ENCODE measurements at regions of chr14 and their contacts with region 1.

Region 1: DNA sequence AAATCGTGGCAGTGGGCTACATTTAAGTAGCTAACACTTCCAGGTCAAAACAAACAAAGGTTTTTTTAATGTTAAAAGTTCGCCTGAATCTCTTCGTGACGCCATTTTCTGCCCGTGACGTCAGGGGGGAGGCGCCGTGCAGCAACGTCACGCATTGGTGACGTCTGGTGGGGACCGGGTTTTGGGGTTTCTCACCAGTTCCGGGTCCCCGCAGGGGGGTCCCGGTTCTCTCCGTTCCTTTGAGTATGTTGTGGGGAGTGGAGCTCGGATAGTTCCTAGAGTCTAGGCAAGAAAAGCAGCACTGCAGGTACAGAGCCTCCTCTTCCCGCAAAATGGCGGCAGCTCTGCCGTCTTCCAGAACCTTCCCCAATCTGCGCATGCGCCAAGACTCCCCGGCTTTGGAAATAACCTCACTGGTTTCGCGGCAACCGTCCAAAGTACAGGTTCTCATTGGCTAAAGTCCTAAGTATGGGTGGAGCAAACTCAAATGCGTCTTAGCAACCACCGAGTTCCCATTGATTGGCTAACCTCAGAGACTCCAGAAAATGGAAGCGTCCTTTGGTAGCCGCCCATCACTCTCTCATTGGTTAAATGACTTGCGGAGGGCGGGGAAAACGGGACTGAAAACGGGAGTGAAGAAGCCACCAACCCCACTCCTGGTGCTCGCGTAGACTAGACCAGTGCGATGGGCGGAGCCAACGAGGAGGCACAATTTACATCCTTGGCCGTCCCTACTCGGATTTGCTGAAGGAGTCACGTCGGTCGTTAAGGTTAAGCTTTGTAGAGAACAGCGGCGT is at the start of gene RBM23:
- DNase-seq: peak; percentile 99 to 100
- ATAC-seq: peak; percentile 86 to 97 (median 91)
- H3K4me3 ChIP-seq: peak within 1 kb of the TSS; percentile 64
- H3K4me3 Mint-ChIP-seq: peak within 1 kb of the TSS; percentile 99
- H3K27ac ChIP-seq: peak within 1 kb of the TSS; percentile 96
- H3K27ac Mint-ChIP-seq: peak within 1 kb of the TSS; percentile 100
- H3K4me1 ChIP-seq: peaks cover 21% of the 10 kb centered on the region
- H3K4me1 Mint-ChIP-seq: peaks cover 25 to 30% of the 10 kb centered on the region in 2 donors
- H3K27me3 ChIP-seq: no peaks in the 10 kb centered on the region
- H3K27me3 Mint-ChIP-seq: peaks cover 0 to 3% of the 10 kb centered on the region in 2 donors
- CTCF ChIP-seq: no peak
- total RNA-seq, gene RBM23: 86.4 to 120 (median 108) TPM

Region 2: GRCh38 chr14:21924479-21924878 is 994.5 kb before region 1 on chr14:
- intact Hi-C with region 1: loop called (anchors 10 kb)
- DNase-seq: peak; percentile 53 to 85
- ATAC-seq: peak; percentile 76 to 80 (median 76)
- H3K4me3 ChIP-seq: peak overlapping the region; percentile 10
- H3K4me3 Mint-ChIP-seq: peak overlapping the region; percentile 85
- H3K27ac ChIP-seq: peak overlapping the region; percentile 78
- H3K27ac Mint-ChIP-seq: peak overlapping the region; percentile 85 to 88
- H3K4me1 ChIP-seq: peaks cover 16% of the 10 kb centered on the region
- H3K4me1 Mint-ChIP-seq: peaks cover 61 to 64% of the 10 kb centered on the region in 2 donors
- H3K27me3 ChIP-seq: no peaks in the 10 kb centered on the region
- H3K27me3 Mint-ChIP-seq: no peaks in the 10 kb centered on the region
- CTCF ChIP-seq: peak; percentile 27

Region 3: DNA sequence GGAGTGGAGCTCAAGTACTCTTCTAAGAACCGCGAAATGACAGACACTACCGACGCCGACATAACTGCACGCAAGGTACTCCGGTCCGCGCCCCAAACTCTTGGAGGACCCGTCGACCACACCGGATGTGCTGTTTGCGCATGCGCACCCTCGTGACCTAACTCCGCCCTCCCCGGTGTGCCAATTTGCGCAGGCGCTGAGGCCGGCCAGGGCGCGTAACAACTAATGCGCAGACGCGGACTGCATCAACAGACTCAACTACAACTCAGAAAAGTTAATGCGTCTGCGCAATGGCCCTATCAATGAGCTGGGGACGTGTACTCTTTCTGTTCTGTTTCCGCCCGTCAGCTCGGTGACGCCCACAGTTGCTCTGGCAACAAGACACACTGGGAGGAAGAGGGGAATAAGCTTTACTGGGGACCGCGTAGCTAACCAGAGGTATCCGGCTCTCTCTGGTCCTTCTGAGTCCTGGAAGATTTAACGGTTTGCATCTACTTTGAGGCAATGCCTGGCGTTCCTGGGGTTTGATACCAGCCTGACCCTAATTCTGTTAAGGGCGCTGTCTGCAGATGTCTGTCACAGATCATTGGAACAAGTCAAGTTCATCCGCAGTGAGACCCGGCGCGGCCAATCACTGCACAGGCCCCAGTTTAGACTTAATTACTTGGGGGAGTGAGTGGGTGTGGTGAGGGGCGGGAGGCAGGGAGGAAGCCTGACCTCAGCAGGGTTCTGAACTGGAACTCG is 329.7 kb before region 1 on chr14 and contains the start of gene DAD1:
- intact Hi-C with region 1: loop called (anchors 1 kb)
- DNase-seq: peak; percentile 100
- ATAC-seq: peak; percentile 86 to 96 (median 90)
- H3K4me3 ChIP-seq: peak within 1 kb of the TSS; percentile 80
- H3K4me3 Mint-ChIP-seq: peak within 1 kb of the TSS; percentile 90
- H3K27ac ChIP-seq: peak within 1 kb of the TSS; percentile 97
- H3K27ac Mint-ChIP-seq: peak within 1 kb of the TSS; percentile 97 to 99
- H3K4me1 ChIP-seq: peaks cover 19% of the 10 kb centered on the region
- H3K4me1 Mint-ChIP-seq: peaks cover 45 to 47% of the 10 kb centered on the region in 2 donors
- H3K27me3 ChIP-seq: no peaks in the 10 kb centered on the region
- H3K27me3 Mint-ChIP-seq: peaks cover 13 to 17% of the 10 kb centered on the region in 2 donors
- CTCF ChIP-seq: no peak
- total RNA-seq, gene DAD1: 79.5 to 97.9 (median 92.8) TPM

Region 4: GRCh38 chr14:22766456-22767322 is 152.3 kb before region 1 on chr14 and contains the start of gene OXA1L:
- intact Hi-C with region 1: loop called (anchors 2 kb)
- DNase-seq: peak; percentile 90 to 99
- ATAC-seq: peak; percentile 92 to 95 (median 95)
- H3K4me3 ChIP-seq: peak within 1 kb of the TSS; percentile 86
- H3K4me3 Mint-ChIP-seq: peak within 1 kb of the TSS; percentile 92
- H3K27ac ChIP-seq: peak within 1 kb of the TSS; percentile 79
- H3K27ac Mint-ChIP-seq: peak within 1 kb of the TSS; percentile 93 to 94
- H3K4me1 ChIP-seq: peaks cover 14% of the 10 kb centered on the region
- H3K4me1 Mint-ChIP-seq: peaks cover 35 to 36% of the 10 kb centered on the region in 2 donors
- H3K27me3 ChIP-seq: no peaks in the 10 kb centered on the region
- H3K27me3 Mint-ChIP-seq: no peaks in the 10 kb centered on the region
- CTCF ChIP-seq: no peak
- total RNA-seq, gene OXA1L: 121 to 143 (median 125) TPM

Region 5: DNA sequence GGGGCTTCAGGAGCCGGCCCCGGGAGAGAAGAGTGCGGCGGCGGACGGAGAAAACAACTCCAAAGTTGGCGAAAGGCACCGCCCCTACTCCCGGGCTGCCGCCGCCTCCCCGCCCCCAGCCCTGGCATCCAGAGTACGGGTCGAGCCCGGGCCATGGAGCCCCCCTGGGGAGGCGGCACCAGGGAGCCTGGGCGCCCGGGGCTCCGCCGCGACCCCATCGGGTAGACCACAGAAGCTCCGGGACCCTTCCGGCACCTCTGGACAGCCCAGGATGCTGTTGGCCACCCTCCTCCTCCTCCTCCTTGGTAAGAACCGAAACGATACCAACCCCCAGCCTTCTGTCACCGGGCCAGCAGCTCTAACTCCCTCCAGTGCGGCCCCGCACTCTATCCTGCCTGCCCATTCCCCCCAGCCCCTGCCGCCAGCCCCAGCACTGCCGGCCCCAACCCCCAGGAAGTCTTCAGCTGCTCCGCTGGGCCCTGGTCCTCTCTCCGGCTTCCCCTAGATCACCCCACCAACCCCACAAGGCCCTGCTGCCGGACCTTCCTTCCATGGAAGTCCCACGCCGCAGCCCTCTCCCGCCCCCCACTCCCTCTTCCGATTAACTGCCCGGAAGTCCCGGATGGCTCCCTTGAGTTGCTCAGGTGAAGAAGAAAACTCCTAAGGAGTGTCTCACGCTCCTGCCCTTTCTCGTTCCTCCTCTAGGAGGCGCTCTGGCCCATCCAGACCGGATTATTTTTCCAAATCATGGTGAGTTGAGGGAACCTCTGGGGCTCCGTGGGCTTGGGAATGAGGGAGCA is 46.8 kb before region 1 on chr14:
- intact Hi-C with region 1: loop called (anchors 1 kb)
- DNase-seq: peak; percentile 67 to 86
- ATAC-seq: peak; percentile 44 to 56 (median 52)
- H3K4me3 ChIP-seq: peak overlapping the region; percentile 85
- H3K4me3 Mint-ChIP-seq: peak overlapping the region; percentile 93
- H3K27ac ChIP-seq: peak overlapping the region; percentile 93
- H3K27ac Mint-ChIP-seq: peak overlapping the region; percentile 95 to 96
- H3K4me1 ChIP-seq: peaks cover 17% of the 10 kb centered on the region
- H3K4me1 Mint-ChIP-seq: peaks cover 32 to 39% of the 10 kb centered on the region in 2 donors
- H3K27me3 ChIP-seq: no peaks in the 10 kb centered on the region
- H3K27me3 Mint-ChIP-seq: no peaks in the 10 kb centered on the region
- CTCF ChIP-seq: peak; percentile 81

Region 6: GRCh38 chr14:22886500-22887259 is 32.3 kb before region 1 on chr14:
- intact Hi-C with region 1: loop called (anchors 2 kb)
- DNase-seq: peak; percentile 63 to 84
- ATAC-seq: peak; percentile 78 to 80 (median 79)
- H3K4me3 ChIP-seq: peak overlapping the region; percentile 44
- H3K4me3 Mint-ChIP-seq: peak overlapping the region; percentile 91
- H3K27ac ChIP-seq: peak overlapping the region; percentile 72
- H3K27ac Mint-ChIP-seq: peak overlapping the region; percentile 74 to 85
- H3K4me1 ChIP-seq: peaks cover 34% of the 10 kb centered on the region
- H3K4me1 Mint-ChIP-seq: peaks cover 40 to 64% of the 10 kb centered on the region in 2 donors
- H3K27me3 ChIP-seq: no peaks in the 10 kb centered on the region
- H3K27me3 Mint-ChIP-seq: peaks cover 0 to 3% of the 10 kb centered on the region in 2 donors
- CTCF ChIP-seq: peak; percentile 21

Region 7: DNA sequence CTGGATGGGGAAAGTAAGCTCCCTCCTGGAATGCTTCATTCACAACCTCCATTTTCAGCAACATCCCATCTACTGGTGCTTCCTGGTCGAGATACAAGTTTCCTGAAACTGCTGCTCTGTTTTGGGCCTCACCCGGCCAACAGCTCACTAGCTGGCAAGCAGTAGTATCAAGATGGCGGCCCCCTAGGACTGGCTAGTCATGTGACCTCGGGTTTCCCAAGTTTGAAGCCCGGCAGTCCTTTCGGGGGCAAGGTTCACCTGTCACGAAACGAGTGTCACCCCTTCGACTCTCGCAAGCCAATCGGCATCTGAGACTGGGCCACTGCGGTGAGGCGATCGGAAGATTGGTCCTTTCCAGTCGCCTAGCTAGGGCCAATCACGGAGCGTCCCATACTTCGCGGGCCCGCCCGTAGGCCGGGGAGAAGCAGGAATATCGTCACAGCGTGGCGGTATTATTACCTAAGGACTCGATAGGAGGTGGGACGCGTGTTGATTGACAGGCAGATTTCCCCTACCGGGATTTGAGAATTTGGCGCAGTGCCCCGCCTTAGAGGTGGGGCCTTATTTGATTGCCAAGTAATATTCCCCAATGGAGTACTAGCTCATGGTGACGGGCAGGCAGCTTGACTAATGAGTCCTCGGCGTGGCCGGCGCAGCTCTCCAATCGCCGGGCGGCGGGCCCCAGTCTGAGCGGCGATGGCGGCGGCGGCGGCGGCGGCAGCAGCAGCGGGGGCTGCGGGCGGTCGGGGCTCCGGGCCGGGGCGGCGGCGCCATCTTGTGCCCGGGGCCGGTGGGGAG is 402.0 kb after region 1 on chr14 and contains the start of gene PABPN1:
- intact Hi-C with region 1: loop called (anchors 5 kb)
- DNase-seq: peak; percentile 95 to 99
- ATAC-seq: peak; percentile 83 to 94 (median 85)
- H3K4me3 ChIP-seq: peak within 1 kb of the TSS; percentile 66
- H3K4me3 Mint-ChIP-seq: peak within 1 kb of the TSS; percentile 92
- H3K27ac ChIP-seq: peak within 1 kb of the TSS; percentile 91
- H3K27ac Mint-ChIP-seq: peak within 1 kb of the TSS; percentile 95 to 96
- H3K4me1 ChIP-seq: peaks cover 23% of the 10 kb centered on the region
- H3K4me1 Mint-ChIP-seq: peaks cover 31 to 35% of the 10 kb centered on the region in 2 donors
- H3K27me3 ChIP-seq: no peaks in the 10 kb centered on the region
- H3K27me3 Mint-ChIP-seq: no peaks in the 10 kb centered on the region
- CTCF ChIP-seq: no peak
- total RNA-seq, gene PABPN1: 226 to 261 (median 238) TPM

Measured in natural killer cell (primary cell).